ENCODE measurements at regions of chr3 and their contacts with region 1.

Region 1: DNA sequence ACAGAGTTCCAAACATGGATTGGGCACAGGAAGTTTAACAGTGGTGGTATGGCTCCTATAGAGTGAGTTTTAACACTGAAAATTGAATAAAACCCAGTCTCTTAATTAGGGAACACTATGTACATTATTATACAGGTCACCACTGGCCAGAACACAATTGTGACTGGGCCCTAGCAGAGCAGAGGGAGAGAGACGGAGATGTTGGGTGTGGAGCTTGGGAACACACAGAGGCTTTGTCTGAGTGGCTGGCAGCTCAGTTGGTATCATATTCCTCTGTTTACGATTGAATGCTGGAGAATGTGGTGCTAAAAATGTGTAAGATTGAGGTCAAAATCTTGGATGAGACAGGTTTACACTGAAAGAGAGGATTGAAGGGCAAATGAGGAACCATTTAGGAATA is 6.8 kb upstream of the MOBP start:
- H3K4me3 ChIP-seq: no peak overlapping the region
- H3K27ac ChIP-seq: no peak overlapping the region
- H3K4me1 ChIP-seq: no peaks in the 10 kb centered on the region
- CTCF ChIP-seq: no peak

Region 2: DNA sequence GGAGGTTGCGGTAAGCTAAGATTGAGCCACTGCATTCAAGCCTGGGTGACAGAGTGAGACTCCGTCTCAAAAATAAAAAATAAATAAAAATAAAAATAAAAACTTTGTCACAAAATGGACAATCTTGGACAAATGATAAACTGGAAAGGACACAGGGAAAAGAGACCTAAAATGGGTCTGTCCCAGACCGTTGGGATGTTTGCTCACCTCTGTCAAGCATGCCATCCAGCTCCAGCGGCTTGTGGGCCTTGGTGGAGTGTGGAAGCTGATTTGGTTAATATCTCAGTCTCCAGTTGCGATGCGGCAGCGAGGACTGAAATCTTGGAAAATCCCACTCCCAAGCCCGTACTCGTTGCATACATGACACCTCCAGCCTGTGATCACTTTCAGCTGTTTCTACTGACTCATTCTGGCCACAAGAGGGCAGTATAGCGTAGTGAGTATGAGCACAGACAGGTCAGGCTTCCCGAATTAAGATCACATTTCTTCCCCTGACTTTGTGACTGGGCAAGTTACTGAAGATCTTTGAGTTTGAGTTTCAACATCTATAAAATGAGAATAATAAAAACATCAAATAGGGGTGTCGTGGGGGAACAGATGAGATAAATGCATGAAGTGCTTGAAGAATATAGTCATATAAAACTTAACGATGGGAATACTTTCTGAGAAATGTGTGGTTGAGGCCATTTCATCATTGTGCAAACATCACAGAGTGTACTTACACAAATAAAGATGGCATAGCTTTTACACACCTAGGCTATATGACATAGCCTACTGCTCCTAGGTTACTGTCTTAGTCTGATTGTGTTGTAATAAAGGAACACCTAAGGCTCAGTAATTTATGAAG is 12.8 kb before region 1 on chr3:
- CTCF ChIA-PET with region 1: interaction called, 19 read pairs
- POLR2A ChIA-PET with region 1: no interaction called
- H3K4me3 ChIP-seq: no peak overlapping the region
- H3K27ac ChIP-seq: no peak overlapping the region
- H3K4me1 ChIP-seq: no peaks in the 10 kb centered on the region
- CTCF ChIP-seq: peak; percentile 61